CD8-positive, alpha-beta memory T cell (primary cell): ENCODE measurements at regions of chr12 and their contacts with region 1.

Region 1: GRCh38 chr12:51531978-51532497 is 59.0 kb upstream of the SCN8A start:
- DNase-seq: peak; percentile 48 to 79 (median 54)
- H3K4me3 ChIP-seq: no peak overlapping the region
- H3K4me3 Mint-ChIP-seq: no peak overlapping the region
- H3K27ac ChIP-seq: no peak overlapping the region
- H3K27ac Mint-ChIP-seq: peak overlapping the region in 2 of 8 donors; percentile 12 to 14
- H3K4me1 ChIP-seq: no peaks in the 10 kb centered on the region
- H3K4me1 Mint-ChIP-seq: peaks cover 2 to 6% (median 6%) of the 10 kb centered on the region in 3 donors
- H3K27me3 ChIP-seq: no peaks in the 10 kb centered on the region
- H3K27me3 Mint-ChIP-seq: peaks cover 13 to 28% of the 10 kb centered on the region in 2 donors

Region 2: GRCh38 chr12:51421266-51421884 is 110.7 kb before region 1 on chr12:
- CTCF ChIA-PET with region 1: interaction called, 10 read pairs
- POLR2A ChIA-PET with region 1: interaction called, 4 read pairs
- DNase-seq: peak in 4 of 5 donors; percentile 7 to 50 (median 29)
- H3K4me3 ChIP-seq: no peak overlapping the region
- H3K4me3 Mint-ChIP-seq: peak overlapping the region in 1 of 7 donors; percentile 27
- H3K27ac ChIP-seq: no peak overlapping the region
- H3K27ac Mint-ChIP-seq: peak overlapping the region in 1 of 8 donors; percentile 48
- H3K4me1 ChIP-seq: peaks cover 10% of the 10 kb centered on the region
- H3K4me1 Mint-ChIP-seq: peaks cover 8 to 15% (median 10%) of the 10 kb centered on the region in 3 donors
- H3K27me3 ChIP-seq: no peaks in the 10 kb centered on the region
- H3K27me3 Mint-ChIP-seq: peaks cover 0 to 3% of the 10 kb centered on the region in 2 donors

Region 3: GRCh38 chr12:51471111-51471864 is 60.8 kb before region 1 on chr12:
- CTCF ChIA-PET with region 1: no interaction called
- POLR2A ChIA-PET with region 1: no interaction called
- DNase-seq: no peak
- H3K4me3 ChIP-seq: no peak overlapping the region
- H3K4me3 Mint-ChIP-seq: no peak overlapping the region
- H3K27ac ChIP-seq: no peak overlapping the region
- H3K27ac Mint-ChIP-seq: no peak overlapping the region
- H3K4me1 ChIP-seq: no peaks in the 10 kb centered on the region
- H3K4me1 Mint-ChIP-seq: no peaks in the 10 kb centered on the region
- H3K27me3 ChIP-seq: no peaks in the 10 kb centered on the region
- H3K27me3 Mint-ChIP-seq: no peaks in the 10 kb centered on the region